Heart left ventricle (tissue), 16 donors: ENCODE measurements at regions of chr7 and their contacts with region 1.

Region 1: GRCh38 chr7:88062238-88062637 is 128.2 kb downstream of the ADAM22 start:
- DNase-seq: no peak
- ATAC-seq: no peak
- H3K4me3 ChIP-seq: no peak overlapping the region
- H3K27ac ChIP-seq: no peak overlapping the region
- H3K4me1 ChIP-seq: peaks cover 0 to 1% (median 0%) of the 10 kb centered on the region in 12 donors
- H3K27me3 ChIP-seq: no peaks in the 10 kb centered on the region
- CTCF ChIP-seq: no peak
- POLR2A ChIP-seq: no peak

Region 2: GRCh38 chr7:88015309-88015708 is 46.9 kb before region 1 on chr7:
- intact Hi-C with region 1: loop called in 1 of 10 experiments (anchors 10 kb)
- DNase-seq: no peak
- ATAC-seq: no peak
- H3K4me3 ChIP-seq: no peak overlapping the region
- H3K27ac ChIP-seq: no peak overlapping the region
- H3K4me1 ChIP-seq: no peaks in the 10 kb centered on the region
- H3K27me3 ChIP-seq: no peaks in the 10 kb centered on the region
- CTCF ChIP-seq: no peak
- POLR2A ChIP-seq: no peak

Region 3: DNA sequence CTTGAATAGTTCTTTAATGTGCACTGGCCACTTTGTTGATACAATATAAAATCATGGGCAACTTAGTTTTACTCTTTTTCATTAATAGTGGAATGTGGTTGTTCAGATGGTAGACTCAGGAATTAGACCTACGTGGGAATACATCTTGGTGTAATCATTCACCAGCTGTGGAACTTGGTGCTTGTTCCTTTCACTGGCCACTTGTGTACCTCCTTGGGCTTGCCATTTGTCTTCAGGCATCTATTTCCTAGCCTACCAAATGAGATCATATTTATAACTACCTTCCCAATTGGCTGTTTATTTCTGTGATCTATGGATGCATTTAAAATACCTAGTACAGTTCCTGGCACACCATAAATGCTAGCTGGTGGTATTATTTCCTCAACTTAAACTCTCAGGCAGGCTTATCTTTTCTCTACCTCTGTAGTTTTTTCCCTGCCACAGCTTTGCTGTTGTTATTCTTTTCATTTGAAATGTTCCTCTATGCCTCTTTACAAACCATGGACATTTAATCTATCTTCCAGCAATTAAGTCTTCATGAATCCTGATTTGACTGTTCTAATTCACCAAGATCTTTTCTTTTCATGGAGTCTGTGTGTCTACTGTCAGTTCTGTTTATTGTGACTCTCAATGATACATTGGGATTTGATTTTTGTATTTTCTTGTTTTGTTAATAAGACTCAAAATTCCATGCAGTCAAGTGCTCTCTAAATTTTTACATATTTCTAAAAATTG is 15.2 kb before region 1 on chr7:
- intact Hi-C with region 1: loop called in 1 of 10 experiments (anchors 2 kb)
- DNase-seq: no peak
- ATAC-seq: no peak
- H3K4me3 ChIP-seq: no peak overlapping the region
- H3K27ac ChIP-seq: peak overlapping the region in 4 of 12 donors; percentile 33 to 56 (median 45)
- H3K4me1 ChIP-seq: peaks cover 0 to 14% (median 8%) of the 10 kb centered on the region in 12 donors
- H3K27me3 ChIP-seq: no peaks in the 10 kb centered on the region
- CTCF ChIP-seq: no peak
- POLR2A ChIP-seq: no peak